Activated B cell treated with CpG ODN at 0.5 μM for 24 hours (primary cell): ENCODE measurements at regions of chr15 and their contacts with region 1.

Region 1: GRCh38 chr15:80695104-80695910 is at the start of gene ABHD17C:
- DNase-seq: peak; percentile 58
- ATAC-seq: peak; percentile 82
- H3K4me3 Mint-ChIP-seq: peak within 1 kb of the TSS; percentile 87
- H3K27ac Mint-ChIP-seq: peak within 1 kb of the TSS; percentile 69
- H3K4me1 Mint-ChIP-seq: peaks cover 16% of the 10 kb centered on the region
- H3K27me3 Mint-ChIP-seq: peaks cover 5% of the 10 kb centered on the region
- CTCF ChIP-seq: no peak
- total RNA-seq, gene ABHD17C: 2.4 and 2.5 TPM in 2 replicates

Region 2: GRCh38 chr15:79310983-79311900 is 1384.1 kb before region 1 on chr15 and contains the start of gene TMED3:
- CTCF ChIA-PET with region 1: no interaction called
- POLR2A ChIA-PET with region 1: interaction called, 4 read pairs
- intact Hi-C with region 1: loop called (anchors 10 kb)
- DNase-seq: peak; percentile 80
- ATAC-seq: peak; percentile 94
- H3K4me3 Mint-ChIP-seq: peak within 1 kb of the TSS; percentile 84
- H3K27ac Mint-ChIP-seq: peak within 1 kb of the TSS; percentile 68
- H3K4me1 Mint-ChIP-seq: peaks cover 29% of the 10 kb centered on the region
- H3K27me3 Mint-ChIP-seq: peaks cover 2% of the 10 kb centered on the region
- CTCF ChIP-seq: no peak
- total RNA-seq, gene TMED3: 24.7 and 25.0 TPM in 2 replicates

Region 3: DNA sequence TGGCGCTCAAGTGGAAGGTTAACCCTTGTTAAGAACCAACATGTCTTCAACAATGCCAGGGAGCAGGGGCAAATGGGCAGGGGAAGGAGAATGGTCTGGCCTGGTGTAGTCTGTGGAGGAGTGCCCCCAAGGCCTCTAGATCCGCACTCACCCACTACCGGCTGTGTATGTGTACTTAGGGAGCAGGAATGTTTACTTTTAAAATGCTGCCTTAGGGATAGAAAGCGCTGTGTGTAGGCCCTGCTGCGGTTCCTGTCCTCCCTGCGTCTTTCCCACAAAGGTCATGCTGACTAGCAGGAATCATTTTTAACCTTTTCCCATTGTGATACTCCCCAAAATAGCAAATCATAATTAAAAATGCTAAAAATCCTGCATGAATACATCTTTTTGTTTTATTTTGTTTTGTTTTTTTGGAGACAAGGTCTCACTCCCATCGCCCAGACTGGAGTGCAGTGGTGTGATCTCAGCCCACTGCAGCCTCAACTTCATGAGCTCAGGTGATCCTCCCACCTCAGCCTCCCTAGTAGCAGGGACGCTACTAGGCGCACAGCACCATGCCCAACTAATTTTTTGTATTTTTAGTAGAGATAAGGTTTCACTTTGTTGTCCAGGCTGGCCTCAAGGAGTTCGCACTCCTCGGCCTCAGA is 48.0 kb after region 1 on chr15:
- CTCF ChIA-PET with region 1: no interaction called
- POLR2A ChIA-PET with region 1: no interaction called
- intact Hi-C with region 1: no loop called
- DNase-seq: no peak
- ATAC-seq: no peak
- H3K4me3 Mint-ChIP-seq: no peak overlapping the region
- H3K27ac Mint-ChIP-seq: no peak overlapping the region
- H3K4me1 Mint-ChIP-seq: no peaks in the 10 kb centered on the region
- H3K27me3 Mint-ChIP-seq: no peaks in the 10 kb centered on the region
- CTCF ChIP-seq: no peak